ENCODE measurements at regions of chr17 and their contacts with region 1.

Region 1: GRCh38 chr17:14118951-14119350 is 49.6 kb downstream of the COX10 start:
- DNase-seq: no peak
- H3K4me3 Mint-ChIP-seq: peak overlapping the region; percentile 59
- H3K27ac Mint-ChIP-seq: peak overlapping the region; percentile 92
- H3K4me1 Mint-ChIP-seq: peaks cover 78% of the 10 kb centered on the region
- H3K27me3 Mint-ChIP-seq: no peaks in the 10 kb centered on the region

Region 2: DNA sequence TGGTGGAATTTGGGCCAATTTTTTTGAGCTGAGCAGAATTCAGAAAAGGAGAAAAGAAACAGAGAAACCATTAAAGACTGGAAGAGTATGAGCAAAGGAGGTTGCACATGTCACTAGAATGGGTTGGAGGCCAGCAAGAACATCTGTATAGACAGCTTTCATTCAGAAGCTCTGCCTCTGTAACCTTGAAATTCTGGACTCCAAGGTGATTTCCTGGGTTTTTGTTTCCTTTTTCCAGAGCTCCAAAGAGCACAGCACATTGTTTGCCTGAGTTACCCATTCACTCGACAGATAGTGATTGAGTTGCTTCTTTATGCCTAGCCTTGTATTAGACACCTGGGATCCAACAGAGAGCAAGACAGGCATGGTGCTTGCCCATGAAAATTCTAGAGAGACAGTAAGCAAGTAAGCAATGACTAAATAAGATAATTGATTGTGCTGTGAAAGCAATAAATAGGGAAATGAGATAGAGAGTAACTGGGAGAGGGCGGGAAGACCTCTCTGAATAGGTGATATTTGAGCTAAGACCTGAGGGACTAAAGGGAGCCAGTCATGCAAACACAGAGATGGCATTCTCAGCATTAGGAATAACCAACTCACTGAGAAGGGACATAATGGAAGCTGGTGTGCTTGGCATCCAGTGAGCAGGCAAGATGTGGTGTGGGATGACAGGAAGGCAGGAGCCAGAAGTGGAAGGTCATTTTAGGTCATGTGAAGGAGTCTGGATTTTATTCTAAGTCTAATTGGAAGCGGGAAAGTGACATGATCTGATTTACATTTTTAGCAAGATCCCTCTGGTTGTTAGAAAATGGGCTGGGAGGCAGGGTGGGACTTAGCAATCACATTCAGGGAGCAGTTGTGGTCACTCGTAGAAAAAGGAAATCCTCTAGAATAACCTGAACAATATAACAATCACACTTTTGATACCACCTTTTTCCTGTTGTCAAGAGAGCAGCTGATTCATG is 714.7 kb before region 1 on chr17:
- intact Hi-C with region 1: no loop called
- DNase-seq: no peak
- H3K4me3 Mint-ChIP-seq: no peak overlapping the region
- H3K27ac Mint-ChIP-seq: no peak overlapping the region
- H3K4me1 Mint-ChIP-seq: no peaks in the 10 kb centered on the region
- H3K27me3 Mint-ChIP-seq: no peaks in the 10 kb centered on the region

Region 3: DNA sequence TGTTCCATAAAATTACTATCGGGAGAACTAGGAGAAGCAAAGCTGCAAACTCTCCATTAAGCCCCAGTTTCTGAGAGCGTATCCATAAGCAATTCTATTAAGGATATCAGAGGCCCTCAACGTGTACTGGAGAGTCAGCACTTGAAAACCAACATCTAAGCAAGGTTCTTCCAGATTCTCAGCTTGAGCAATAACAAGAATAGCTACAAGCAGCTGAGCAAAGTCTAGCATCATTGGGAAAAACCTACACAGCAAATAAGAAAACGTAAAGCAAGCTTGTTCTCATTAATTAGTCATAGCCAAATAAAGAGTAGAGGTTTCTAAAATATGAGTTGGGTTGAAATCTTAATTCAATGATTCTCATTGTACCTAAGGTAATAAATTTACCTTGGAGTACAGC is 76.5 kb before region 1 on chr17:
- intact Hi-C with region 1: loop called (anchors 2 kb)
- DNase-seq: no peak
- H3K4me3 Mint-ChIP-seq: no peak overlapping the region
- H3K27ac Mint-ChIP-seq: no peak overlapping the region
- H3K4me1 Mint-ChIP-seq: peaks cover 50% of the 10 kb centered on the region
- H3K27me3 Mint-ChIP-seq: no peaks in the 10 kb centered on the region

Region 4: DNA sequence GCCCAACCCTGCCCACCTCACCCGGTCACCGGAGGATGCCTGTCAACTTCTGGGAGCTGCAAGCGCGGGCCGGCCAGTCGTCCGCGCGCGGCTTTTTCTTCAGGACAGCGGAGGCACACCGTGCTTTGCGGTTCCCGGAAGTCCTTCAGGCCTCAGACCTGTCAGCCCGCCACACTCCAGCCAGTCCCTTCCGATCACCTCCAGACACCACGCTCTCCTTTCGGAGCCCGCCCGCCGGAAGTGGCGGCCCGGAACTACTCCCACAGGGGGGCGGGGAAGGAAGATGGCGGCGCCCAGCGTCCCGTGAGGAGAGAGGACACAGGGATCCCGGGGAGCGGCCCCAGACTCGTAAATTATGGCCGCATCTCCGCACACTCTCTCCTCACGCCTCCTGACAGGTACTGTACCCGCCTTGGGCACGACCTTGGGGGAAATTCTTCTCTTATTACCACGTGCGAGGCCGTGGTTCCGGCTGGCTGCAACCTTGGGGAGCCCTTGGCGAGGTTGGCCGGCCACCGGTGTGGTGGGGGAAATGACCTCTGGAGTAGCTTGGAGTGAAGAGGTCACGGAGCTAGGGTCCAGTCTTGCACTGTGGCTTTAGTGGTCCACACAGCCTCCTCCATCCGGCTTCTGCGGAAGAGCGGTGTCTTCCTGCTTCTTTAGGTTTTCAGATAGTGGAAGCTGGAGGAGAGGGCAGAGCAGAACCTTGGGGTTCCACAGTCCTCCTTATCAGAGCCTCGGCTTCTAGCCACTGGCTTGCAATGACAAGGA is 49.5 kb before region 1 on chr17 and contains the start of gene COX10:
- intact Hi-C with region 1: loop called (anchors 2 kb)
- DNase-seq: peak; percentile 80
- H3K4me3 Mint-ChIP-seq: peak within 1 kb of the TSS; percentile 96
- H3K27ac Mint-ChIP-seq: peak within 1 kb of the TSS; percentile 94
- H3K4me1 Mint-ChIP-seq: peaks cover 45% of the 10 kb centered on the region
- H3K27me3 Mint-ChIP-seq: no peaks in the 10 kb centered on the region
- total RNA-seq, gene COX10: 24.9 and 28.1 TPM in 2 replicates

Region 5: GRCh38 chr17:14078027-14078426 is 40.9 kb before region 1 on chr17:
- intact Hi-C with region 1: loop called (anchors 1 kb)
- DNase-seq: peak; percentile 12
- H3K4me3 Mint-ChIP-seq: no peak overlapping the region
- H3K27ac Mint-ChIP-seq: peak overlapping the region; percentile 77
- H3K4me1 Mint-ChIP-seq: peaks cover 49% of the 10 kb centered on the region
- H3K27me3 Mint-ChIP-seq: no peaks in the 10 kb centered on the region

Region 6: GRCh38 chr17:14197586-14197985 is 78.6 kb after region 1 on chr17:
- intact Hi-C with region 1: loop called (anchors 1 kb)
- DNase-seq: peak; percentile 42
- H3K4me3 Mint-ChIP-seq: peak overlapping the region; percentile 46
- H3K27ac Mint-ChIP-seq: peak overlapping the region; percentile 79
- H3K4me1 Mint-ChIP-seq: peaks cover 87% of the 10 kb centered on the region
- H3K27me3 Mint-ChIP-seq: no peaks in the 10 kb centered on the region

Measured in activated T-helper 2 cell treated with anti-CD3 and anti-CD28 coated beads, Interferon-gamma antibody, Interleukin-2, Interleukin-4, amounts not matched to agents 10 μg/mL and 5 μg/mL and 100 μg/mL, durations not matched to agents 14 hours and 24 hours and 36 hours (primary cell).